ENCODE measurements at regions of chr4 and their contacts with region 1.

Region 1: GRCh38 chr4:8917868-8918783 is 46.5 kb upstream of the HMX1 start:
- DNase-seq: peak; percentile 66 to 82
- H3K4me3 ChIP-seq: no peak overlapping the region
- H3K27ac ChIP-seq: no peak overlapping the region
- H3K4me1 ChIP-seq: peaks cover 0 to 7% (median 3%) of the 10 kb centered on the region in 4 donors
- H3K27me3 ChIP-seq: peaks cover 0 to 72% (median 5%) of the 10 kb centered on the region in 3 donors
- CTCF ChIP-seq: peak in 5 of 7 experiments; percentile 55 to 79 (median 72)
- EP300 ChIP-seq: no peak
- POLR2A ChIP-seq: no peak

Region 2: DNA sequence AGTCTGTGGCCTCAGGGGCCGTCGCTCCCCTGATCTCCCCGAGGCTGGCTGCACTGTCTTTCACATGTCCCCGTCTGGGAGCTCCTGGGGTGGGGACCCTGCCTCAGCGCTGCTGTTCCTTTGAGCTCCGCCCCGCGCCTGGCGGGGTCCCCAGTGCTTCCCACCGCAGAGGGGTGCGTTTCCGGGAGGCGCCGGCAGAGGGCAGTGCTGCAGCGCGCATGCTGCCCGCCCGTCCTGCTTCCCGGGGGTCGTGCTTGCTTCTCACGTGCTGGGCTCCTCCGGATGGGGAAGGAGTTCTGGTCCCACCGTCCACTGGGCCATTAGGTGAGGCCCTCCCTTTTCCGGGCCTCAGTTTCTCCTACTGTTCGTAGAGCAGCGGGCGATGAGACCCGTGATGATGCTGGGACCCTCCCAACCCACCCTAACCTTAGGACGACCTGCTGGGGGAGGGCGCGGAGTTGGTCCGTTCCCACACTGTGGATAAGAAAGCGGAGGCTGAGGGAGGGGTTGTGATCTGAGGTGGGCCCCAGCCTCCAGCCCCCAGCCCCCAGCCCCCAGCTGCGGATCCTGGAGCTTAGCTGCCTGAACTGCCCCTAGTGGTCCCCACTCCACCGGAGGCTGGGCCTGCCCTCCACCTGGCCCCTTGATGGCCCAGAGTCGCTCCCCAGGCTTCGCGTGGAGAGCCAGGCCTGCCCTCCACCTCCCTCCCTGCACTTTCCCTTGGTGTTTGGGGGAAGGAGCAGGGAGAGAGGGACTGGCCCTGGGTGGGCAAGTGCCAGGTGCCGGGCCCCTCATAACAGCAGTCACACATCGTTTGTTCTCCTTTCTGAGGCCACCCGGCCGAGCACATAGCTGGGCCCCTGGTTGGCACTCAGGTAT is 310.3 kb before region 1 on chr4:
- intact Hi-C with region 1: loop called (anchors 10 kb)
- DNase-seq: peak; percentile 38 to 71
- H3K4me3 ChIP-seq: no peak overlapping the region
- H3K27ac ChIP-seq: no peak overlapping the region
- H3K4me1 ChIP-seq: peaks cover 0 to 7% (median 3%) of the 10 kb centered on the region in 4 donors
- H3K27me3 ChIP-seq: peaks cover 0 to 33% (median 14%) of the 10 kb centered on the region in 3 donors
- CTCF ChIP-seq: peak in 5 of 7 experiments; percentile 66 to 93 (median 89)
- EP300 ChIP-seq: no peak
- POLR2A ChIP-seq: no peak

Region 3: GRCh38 chr4:8639777-8640720 is 278.1 kb before region 1 on chr4:
- intact Hi-C with region 1: no loop called
- DNase-seq: no peak
- H3K4me3 ChIP-seq: no peak overlapping the region
- H3K27ac ChIP-seq: no peak overlapping the region
- H3K4me1 ChIP-seq: no peaks in the 10 kb centered on the region
- H3K27me3 ChIP-seq: peaks cover 0 to 39% (median 4%) of the 10 kb centered on the region in 3 donors
- CTCF ChIP-seq: no peak
- EP300 ChIP-seq: no peak
- POLR2A ChIP-seq: no peak